PC-3 (cell line): ENCODE measurements at regions of chr13 and their contacts with region 1.

Region 1: DNA sequence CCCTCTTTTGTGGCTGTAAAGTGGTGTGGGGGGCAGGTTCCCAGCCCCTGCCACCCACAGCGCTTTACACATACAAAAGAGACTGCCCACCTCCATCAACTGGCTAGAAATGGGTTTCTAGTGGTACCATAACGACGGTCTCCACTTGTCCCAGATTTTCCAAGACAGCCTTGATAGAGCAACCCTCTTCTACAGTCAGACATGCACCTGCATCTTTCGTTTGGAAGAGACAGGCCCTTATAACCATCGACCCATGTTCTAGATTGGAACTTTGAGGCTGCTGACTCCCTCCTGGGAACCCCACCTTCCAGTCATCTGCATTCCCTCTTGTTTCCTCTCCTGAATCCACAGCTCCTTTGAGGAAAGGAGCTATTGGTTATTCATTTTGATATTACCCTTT is 63.1 kb downstream of the GSX1 start:
- DNase-seq: no peak
- ATAC-seq: no peak
- H3K4me3 ChIP-seq: no peak overlapping the region
- H3K27ac ChIP-seq: no peak overlapping the region
- H3K4me1 ChIP-seq: no peaks in the 10 kb centered on the region
- H3K27me3 ChIP-seq: peaks cover 72% of the 10 kb centered on the region
- CTCF ChIP-seq: no peak

Region 2: DNA sequence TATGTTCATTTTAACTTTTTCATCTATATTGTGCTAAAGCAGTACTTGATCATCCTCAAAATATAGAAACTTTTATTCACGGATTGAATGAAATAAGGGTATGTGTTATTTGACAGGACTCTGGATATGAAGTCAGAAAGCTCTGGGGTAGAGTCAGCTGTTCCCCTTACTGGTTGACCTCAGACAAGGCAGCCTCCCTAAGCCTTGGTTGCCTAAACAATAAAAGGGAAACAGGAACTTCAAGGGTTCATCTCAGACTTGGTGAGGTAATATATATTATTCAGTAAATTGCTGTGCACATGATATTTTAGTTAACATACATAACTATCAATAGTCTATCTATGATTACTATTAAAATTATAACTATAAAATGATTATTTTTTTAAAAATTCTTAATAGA is 220.1 kb before region 1 on chr13:
- CTCF ChIA-PET with region 1: no interaction called
- POLR2A ChIA-PET with region 1: no interaction called
- intact Hi-C with region 1: no loop called
- DNase-seq: no peak
- ATAC-seq: no peak
- H3K4me3 ChIP-seq: no peak overlapping the region
- H3K27ac ChIP-seq: no peak overlapping the region
- H3K4me1 ChIP-seq: no peaks in the 10 kb centered on the region
- H3K27me3 ChIP-seq: no peaks in the 10 kb centered on the region
- CTCF ChIP-seq: no peak

Region 3: GRCh38 chr13:27878274-27878673 is 22.9 kb after region 1 on chr13:
- CTCF ChIA-PET with region 1: interaction called, 13 read pairs
- POLR2A ChIA-PET with region 1: no interaction called
- intact Hi-C with region 1: no loop called
- DNase-seq: no peak
- ATAC-seq: no peak
- H3K4me3 ChIP-seq: no peak overlapping the region
- H3K27ac ChIP-seq: no peak overlapping the region
- H3K4me1 ChIP-seq: no peaks in the 10 kb centered on the region
- H3K27me3 ChIP-seq: peaks cover 67% of the 10 kb centered on the region
- CTCF ChIP-seq: no peak